ENCODE measurements at regions of chr17 and their contacts with region 1.

Region 1: GRCh38 chr17:20121359-20122253 is 112.4 kb downstream of the SPECC1 start:
- DNase-seq: peak; percentile 80
- H3K4me3 Mint-ChIP-seq: no peak overlapping the region
- H3K27ac Mint-ChIP-seq: no peak overlapping the region
- H3K4me1 Mint-ChIP-seq: no peaks in the 10 kb centered on the region
- H3K27me3 Mint-ChIP-seq: no peaks in the 10 kb centered on the region

Region 2: GRCh38 chr17:20315821-20316220 is 194.2 kb after region 1 on chr17:
- CTCF ChIA-PET with region 1: interaction called, 19 read pairs
- intact Hi-C with region 1: loop called (anchors 1 kb)
- DNase-seq: no peak
- H3K4me3 Mint-ChIP-seq: no peak overlapping the region
- H3K27ac Mint-ChIP-seq: no peak overlapping the region
- H3K4me1 Mint-ChIP-seq: peaks cover under 1% of the 10 kb centered on the region
- H3K27me3 Mint-ChIP-seq: no peaks in the 10 kb centered on the region